Activated CD4-positive, alpha-beta T cell treated with anti-CD3 and anti-CD28 coated beads, Interleukin-2, amount 10 ng/mL, durations not matched to agents 24 days and 14 days (primary cell): ENCODE measurements at regions of chr7 and their contacts with region 1.

Region 1: GRCh38 chr7:93055543-93056107 is 62.2 kb downstream of the SAMD9 start:
- DNase-seq: peak; percentile 62
- H3K4me3 Mint-ChIP-seq: no peak overlapping the region
- H3K27ac Mint-ChIP-seq: no peak overlapping the region
- H3K4me1 Mint-ChIP-seq: peaks cover 13% of the 10 kb centered on the region
- H3K27me3 Mint-ChIP-seq: peaks cover 6% of the 10 kb centered on the region

Region 2: GRCh38 chr7:92421676-92422435 is 633.8 kb before region 1 on chr7:
- intact Hi-C with region 1: loop called (anchors 10 kb)
- DNase-seq: no peak
- H3K4me3 Mint-ChIP-seq: no peak overlapping the region
- H3K27ac Mint-ChIP-seq: no peak overlapping the region
- H3K4me1 Mint-ChIP-seq: peaks cover 14% of the 10 kb centered on the region
- H3K27me3 Mint-ChIP-seq: peaks cover 3% of the 10 kb centered on the region

Region 3: GRCh38 chr7:92609921-92610518 is 445.6 kb before region 1 on chr7:
- intact Hi-C with region 1: no loop called
- DNase-seq: no peak
- H3K4me3 Mint-ChIP-seq: no peak overlapping the region
- H3K27ac Mint-ChIP-seq: peak overlapping the region; percentile 47
- H3K4me1 Mint-ChIP-seq: peaks cover 32% of the 10 kb centered on the region
- H3K27me3 Mint-ChIP-seq: no peaks in the 10 kb centered on the region

Region 4: GRCh38 chr7:92621026-92621540 is 434.5 kb before region 1 on chr7:
- intact Hi-C with region 1: loop called (anchors 1 kb)
- DNase-seq: peak; percentile 93
- H3K4me3 Mint-ChIP-seq: peak overlapping the region; percentile 71
- H3K27ac Mint-ChIP-seq: peak overlapping the region; percentile 95
- H3K4me1 Mint-ChIP-seq: peaks cover 46% of the 10 kb centered on the region
- H3K27me3 Mint-ChIP-seq: no peaks in the 10 kb centered on the region

Region 5: DNA sequence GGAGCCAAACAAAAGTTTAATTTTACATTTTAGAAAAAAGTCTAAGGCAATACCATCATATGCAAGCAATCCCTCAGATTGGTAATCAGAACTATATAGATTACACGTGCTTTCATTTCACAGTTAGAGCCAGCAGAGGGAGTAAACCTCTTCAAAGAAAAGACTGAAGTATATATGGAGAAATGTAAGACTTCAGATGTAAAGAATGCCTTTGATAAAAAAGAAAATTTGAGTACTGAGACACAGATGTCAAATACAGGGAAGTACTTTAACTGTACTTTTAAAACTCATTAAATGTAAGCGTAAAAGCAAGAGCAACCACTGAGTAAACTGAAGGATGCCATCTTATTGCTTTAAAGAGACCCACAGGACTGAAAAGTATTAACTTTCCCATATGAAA is 364.0 kb before region 1 on chr7:
- intact Hi-C with region 1: loop called (anchors 2 kb)
- DNase-seq: peak; percentile 83
- H3K4me3 Mint-ChIP-seq: peak overlapping the region; percentile 56
- H3K27ac Mint-ChIP-seq: peak overlapping the region; percentile 87
- H3K4me1 Mint-ChIP-seq: peaks cover 68% of the 10 kb centered on the region
- H3K27me3 Mint-ChIP-seq: no peaks in the 10 kb centered on the region

Region 6: GRCh38 chr7:92702535-92702934 is 353.1 kb before region 1 on chr7:
- intact Hi-C with region 1: loop called (anchors 1 kb)
- DNase-seq: no peak
- H3K4me3 Mint-ChIP-seq: no peak overlapping the region
- H3K27ac Mint-ChIP-seq: no peak overlapping the region
- H3K4me1 Mint-ChIP-seq: peaks cover 30% of the 10 kb centered on the region
- H3K27me3 Mint-ChIP-seq: no peaks in the 10 kb centered on the region

Region 7: DNA sequence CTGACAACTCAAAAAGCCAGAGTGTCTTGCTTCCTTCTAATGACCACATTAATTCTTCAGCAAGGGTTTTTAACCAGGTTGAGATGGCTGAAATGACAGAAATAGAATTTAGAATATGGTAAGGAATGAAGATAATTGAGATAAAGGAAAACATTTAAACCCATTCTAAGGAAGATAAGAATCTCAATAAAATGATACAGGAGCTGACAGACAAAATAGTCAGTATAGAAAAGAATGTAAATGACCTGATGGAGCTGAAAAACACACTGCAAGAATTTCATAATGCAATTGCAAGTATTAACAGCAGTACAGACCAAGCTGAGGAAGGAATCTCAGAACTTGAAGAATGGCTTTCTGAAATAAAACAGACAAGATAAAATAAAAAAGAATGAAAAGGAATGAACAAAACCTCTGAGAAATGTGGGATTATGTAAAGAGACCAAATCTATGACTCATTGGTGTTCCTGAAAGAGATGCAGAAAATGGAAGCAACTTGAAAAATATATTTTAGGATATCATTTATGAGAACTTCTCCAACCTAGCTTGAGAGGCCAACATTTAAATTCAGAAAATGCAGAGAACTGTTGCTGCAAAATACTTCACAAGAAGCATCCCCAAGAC is 24.9 kb before region 1 on chr7:
- intact Hi-C with region 1: no loop called
- DNase-seq: no peak
- H3K4me3 Mint-ChIP-seq: no peak overlapping the region
- H3K27ac Mint-ChIP-seq: no peak overlapping the region
- H3K4me1 Mint-ChIP-seq: peaks cover 10% of the 10 kb centered on the region
- H3K27me3 Mint-ChIP-seq: no peaks in the 10 kb centered on the region

Region 8: GRCh38 chr7:93117852-93118530 is 62.4 kb after region 1 on chr7 and contains the start of gene SAMD9:
- intact Hi-C with region 1: no loop called
- DNase-seq: peak; percentile 90
- H3K4me3 Mint-ChIP-seq: peak within 1 kb of the TSS; percentile 90
- H3K27ac Mint-ChIP-seq: peak within 1 kb of the TSS; percentile 90
- H3K4me1 Mint-ChIP-seq: peaks cover 54% of the 10 kb centered on the region
- H3K27me3 Mint-ChIP-seq: no peaks in the 10 kb centered on the region
- total RNA-seq, gene SAMD9: 8.6 and 9.4 TPM in 2 replicates